Posterior vena cava (tissue), 2 donors: ENCODE measurements at regions of chr4 and their contacts with region 1.

Region 1: GRCh38 chr4:88378691-88379559 is at the start of gene HERC6:
- DNase-seq: peak; percentile 90
- total RNA-seq, gene HERC6: 6.2 to 7.3 TPM

Region 2: GRCh38 chr4:87304671-87305432 is 1074.1 kb before region 1 on chr4:
- intact Hi-C with region 1: loop called in 1 of 2 experiments (anchors 10 kb)
- DNase-seq: no peak

Region 3: GRCh38 chr4:88284439-88285234 is 94.3 kb before region 1 on chr4 and contains the start of gene PPM1K:
- intact Hi-C with region 1: loop called in 1 of 2 experiments (anchors 10 kb)
- DNase-seq: peak; percentile 100
- total RNA-seq, gene PPM1K: 23.8 to 31.6 TPM

Region 4: DNA sequence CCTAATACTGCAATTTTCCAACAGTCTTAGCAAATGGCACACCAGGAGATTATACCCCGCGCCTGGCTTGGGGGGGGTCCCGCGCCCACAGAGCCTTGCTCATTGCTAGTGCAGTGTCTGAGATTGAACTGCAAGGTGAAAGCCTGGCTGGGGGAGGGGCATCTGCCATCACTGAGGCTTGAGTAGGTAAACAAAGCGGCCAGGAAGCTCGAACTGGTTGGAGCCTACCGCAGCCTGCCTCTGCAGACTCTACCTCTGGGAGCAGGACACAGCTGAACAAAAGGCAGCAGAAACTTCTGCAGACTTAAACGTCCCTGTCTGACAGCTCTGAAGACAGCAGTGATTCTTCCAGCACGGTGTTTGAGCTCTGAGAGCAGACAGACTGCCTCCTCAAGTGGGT is 491.5 kb after region 1 on chr4:
- intact Hi-C with region 1: no loop called
- DNase-seq: no peak